Aorta (tissue), 5 donors: ENCODE measurements at regions of chr5 and their contacts with region 1.

Region 1: DNA sequence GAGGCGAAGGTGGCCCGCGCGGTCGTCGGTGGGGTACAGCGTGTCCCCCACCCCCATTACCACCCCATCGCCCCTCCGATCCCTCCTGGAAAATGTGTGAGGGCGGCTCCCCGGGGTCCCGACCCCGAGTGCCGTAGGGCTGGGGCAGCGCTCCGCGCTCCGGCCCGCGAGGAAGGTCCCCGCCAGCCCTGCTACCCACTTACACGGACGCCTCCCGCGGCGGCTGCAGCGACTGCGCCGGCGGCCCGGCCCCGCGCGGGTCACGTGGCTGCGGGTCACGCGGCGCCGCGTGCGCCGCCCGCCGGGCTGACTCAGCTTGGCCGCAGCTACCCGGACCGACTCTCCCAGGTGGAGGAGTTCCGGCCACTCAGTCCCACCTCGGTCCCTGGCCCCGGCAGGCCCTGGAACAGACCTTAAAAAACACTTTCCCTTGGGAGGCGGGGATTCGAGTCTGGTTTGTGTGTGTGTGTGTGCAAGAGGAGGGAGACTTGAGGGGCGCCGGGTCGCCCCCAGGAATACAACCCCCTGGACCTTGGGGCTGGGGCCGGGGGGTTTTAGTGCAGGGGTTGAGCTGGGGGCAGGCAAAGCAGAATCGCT is at the start of gene GNPDA1:
- DNase-seq: peak; percentile 89 to 93
- ATAC-seq: peak; percentile 93
- H3K4me3 ChIP-seq: peak within 1 kb of the TSS; percentile 63 to 83
- H3K27ac ChIP-seq: peak within 1 kb of the TSS in 1 of 2 donors; percentile 69
- H3K4me1 ChIP-seq: no peaks in the 10 kb centered on the region
- H3K27me3 ChIP-seq: no peaks in the 10 kb centered on the region
- total RNA-seq, gene GNPDA1: 18.7 to 21.5 TPM

Region 2: DNA sequence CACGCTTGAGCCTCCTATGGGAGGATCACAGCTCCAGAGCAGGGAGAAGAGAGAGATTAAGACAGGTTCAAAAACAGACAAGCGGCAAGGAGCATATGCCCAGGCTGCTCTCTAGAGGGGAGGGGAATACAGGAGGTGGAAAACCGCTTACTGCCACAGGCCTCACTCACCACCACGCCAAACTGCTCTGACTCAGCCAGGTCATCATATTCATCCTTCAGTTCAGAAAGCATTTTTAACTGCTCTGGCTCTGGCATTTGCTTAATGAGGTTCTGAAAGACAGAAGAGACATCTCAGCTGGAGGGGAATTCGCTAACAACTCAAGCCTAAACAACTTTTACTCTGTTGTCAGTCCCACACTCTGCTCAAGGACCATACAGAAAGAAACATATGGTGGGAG is 483.9 kb before region 1 on chr5:
- intact Hi-C with region 1: no loop called
- DNase-seq: peak in 1 of 2 donors; percentile 58
- ATAC-seq: no peak
- H3K4me3 ChIP-seq: no peak overlapping the region
- H3K27ac ChIP-seq: peak overlapping the region; percentile 47 to 66
- H3K4me1 ChIP-seq: no peaks in the 10 kb centered on the region
- H3K27me3 ChIP-seq: no peaks in the 10 kb centered on the region

Region 3: GRCh38 chr5:141992349-141992963 is 20.4 kb before region 1 on chr5:
- intact Hi-C with region 1: no loop called
- DNase-seq: peak; percentile 70 to 83
- ATAC-seq: peak; percentile 70
- H3K4me3 ChIP-seq: no peak overlapping the region
- H3K27ac ChIP-seq: no peak overlapping the region
- H3K4me1 ChIP-seq: no peaks in the 10 kb centered on the region
- H3K27me3 ChIP-seq: no peaks in the 10 kb centered on the region

Region 4: DNA sequence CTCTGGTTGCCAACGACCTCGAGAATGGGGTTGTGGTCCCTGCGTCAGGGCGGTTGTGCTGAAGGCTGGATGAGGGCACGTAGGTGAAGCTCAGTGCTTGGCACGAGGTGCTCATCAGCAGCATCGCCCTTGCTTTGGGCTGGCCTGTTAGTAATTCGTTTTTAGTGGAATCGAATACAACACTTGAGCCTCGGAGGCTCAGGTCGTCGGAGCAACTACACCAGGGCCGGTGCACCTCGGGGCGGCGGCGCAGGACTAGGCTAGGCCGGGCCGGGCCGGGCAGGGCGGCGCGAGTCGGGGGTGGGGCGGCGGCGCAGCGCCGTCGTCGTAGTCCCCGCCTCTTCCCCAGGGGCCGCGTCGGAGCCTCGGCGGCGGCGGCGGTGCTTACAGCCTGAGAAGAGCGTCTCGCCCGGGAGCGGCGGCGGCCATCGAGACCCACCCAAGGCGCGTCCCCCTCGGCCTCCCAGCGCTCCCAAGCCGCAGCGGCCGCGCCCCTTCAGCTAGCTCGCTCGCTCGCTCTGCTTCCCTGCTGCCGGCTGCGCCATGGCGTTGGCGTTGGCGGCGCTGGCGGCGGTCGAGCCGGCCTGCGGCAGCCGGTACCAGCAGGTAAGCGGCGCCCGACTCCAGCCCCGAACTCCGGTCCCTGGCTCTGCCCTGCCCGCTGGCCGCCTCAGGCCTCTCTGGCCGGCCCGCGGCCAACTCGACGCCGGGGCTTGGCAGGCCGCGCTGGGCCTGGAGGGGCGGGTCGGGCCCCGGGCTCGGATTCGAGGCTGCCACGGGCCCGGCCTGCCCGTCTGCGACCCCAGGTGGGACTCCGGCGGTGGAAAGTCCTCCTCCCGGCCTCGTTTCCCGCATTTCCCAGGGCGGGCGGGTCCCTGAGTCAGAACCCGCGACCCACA is 95.8 kb after region 1 on chr5 and contains the start of gene NDFIP1:
- intact Hi-C with region 1: loop called in 1 of 2 experiments (anchors 10 kb)
- DNase-seq: peak; percentile 92 to 95
- ATAC-seq: peak; percentile 94
- H3K4me3 ChIP-seq: peak within 1 kb of the TSS; percentile 91 to 99
- H3K27ac ChIP-seq: peak within 1 kb of the TSS; percentile 96 to 97
- H3K4me1 ChIP-seq: peaks cover 0 to 9% of the 10 kb centered on the region in 2 donors
- H3K27me3 ChIP-seq: no peaks in the 10 kb centered on the region
- total RNA-seq, gene NDFIP1: 93.7 to 120 TPM